WTC11 (cell line): ENCODE measurements at regions of chr11 and their contacts with region 1.

Region 1: GRCh38 chr11:64810271-64810890 is at the start of gene MEN1:
- DNase-seq: peak; percentile 98
- ATAC-seq: peak; percentile 99
- H3K4me3 Mint-ChIP-seq: peak within 1 kb of the TSS; percentile 91
- H3K27ac Mint-ChIP-seq: peak within 1 kb of the TSS; percentile 85
- H3K4me1 Mint-ChIP-seq: peaks cover 6% of the 10 kb centered on the region; the same call in 1 of the 2 replicates
- H3K27me3 Mint-ChIP-seq: no peaks in the 10 kb centered on the region
- CTCF ChIP-seq: no peak
- total RNA-seq, gene MEN1: 47.1 to 53.3 TPM (median 51.2 TPM) in 3 replicates

Region 2: DNA sequence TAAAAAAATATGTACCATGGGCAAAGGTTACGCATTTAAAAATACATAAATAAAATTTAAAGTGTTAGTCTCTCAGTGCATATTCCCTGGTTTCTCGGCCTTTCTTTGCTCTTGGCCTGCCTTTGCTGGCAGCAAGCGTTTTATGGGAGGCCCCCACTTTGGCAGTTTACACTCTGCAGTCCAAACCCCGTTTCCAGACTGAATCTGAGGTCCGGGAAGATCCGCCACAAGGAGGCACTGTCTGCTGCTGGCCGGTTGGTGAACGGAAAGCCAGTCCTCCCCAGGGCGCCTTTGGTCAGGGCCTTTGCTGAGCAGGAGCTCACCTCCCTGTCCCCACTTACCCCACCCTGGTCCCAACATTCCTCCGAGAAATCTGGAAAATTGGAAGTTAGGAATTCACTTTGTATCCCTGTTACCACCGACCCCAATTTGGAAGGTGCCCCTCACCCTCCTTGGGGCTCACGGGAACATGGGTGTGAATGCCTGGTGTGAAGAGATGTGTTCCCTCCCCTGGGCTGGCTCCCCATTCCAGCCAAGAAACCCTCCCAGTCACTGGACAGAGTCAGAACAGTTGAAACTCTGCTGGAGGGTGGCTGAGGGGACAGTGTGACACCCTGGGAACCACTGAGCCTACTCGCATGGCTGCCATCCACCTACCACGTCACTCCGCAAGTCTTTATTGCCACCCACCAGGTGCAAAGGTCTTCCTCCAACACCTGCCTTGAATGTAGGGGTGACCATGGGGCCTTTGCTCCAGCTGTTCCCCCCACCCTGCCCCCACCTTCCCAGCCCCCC is 22.7 kb before region 1 on chr11:
- CTCF ChIA-PET with region 1: interaction called, 13 read pairs
- POLR2A ChIA-PET with region 1: no interaction called
- DNase-seq: peak; percentile 85
- ATAC-seq: peak; percentile 91
- H3K4me3 Mint-ChIP-seq: no peak overlapping the region
- H3K27ac Mint-ChIP-seq: no peak overlapping the region
- H3K4me1 Mint-ChIP-seq: no peaks in the 10 kb centered on the region
- H3K27me3 Mint-ChIP-seq: no peaks in the 10 kb centered on the region
- CTCF ChIP-seq: peak; percentile 40

Region 3: GRCh38 chr11:64947208-64947814 is 136.9 kb after region 1 on chr11:
- CTCF ChIA-PET with region 1: no interaction called
- POLR2A ChIA-PET with region 1: no interaction called
- DNase-seq: no peak
- ATAC-seq: no peak
- H3K4me3 Mint-ChIP-seq: no peak overlapping the region
- H3K27ac Mint-ChIP-seq: no peak overlapping the region
- H3K4me1 Mint-ChIP-seq: no peaks in the 10 kb centered on the region
- H3K27me3 Mint-ChIP-seq: peaks cover 9% of the 10 kb centered on the region
- CTCF ChIP-seq: no peak